Tibial artery (tissue), 4 donors: ENCODE measurements at regions of chr13 and their contacts with region 1.

Region 1: DNA sequence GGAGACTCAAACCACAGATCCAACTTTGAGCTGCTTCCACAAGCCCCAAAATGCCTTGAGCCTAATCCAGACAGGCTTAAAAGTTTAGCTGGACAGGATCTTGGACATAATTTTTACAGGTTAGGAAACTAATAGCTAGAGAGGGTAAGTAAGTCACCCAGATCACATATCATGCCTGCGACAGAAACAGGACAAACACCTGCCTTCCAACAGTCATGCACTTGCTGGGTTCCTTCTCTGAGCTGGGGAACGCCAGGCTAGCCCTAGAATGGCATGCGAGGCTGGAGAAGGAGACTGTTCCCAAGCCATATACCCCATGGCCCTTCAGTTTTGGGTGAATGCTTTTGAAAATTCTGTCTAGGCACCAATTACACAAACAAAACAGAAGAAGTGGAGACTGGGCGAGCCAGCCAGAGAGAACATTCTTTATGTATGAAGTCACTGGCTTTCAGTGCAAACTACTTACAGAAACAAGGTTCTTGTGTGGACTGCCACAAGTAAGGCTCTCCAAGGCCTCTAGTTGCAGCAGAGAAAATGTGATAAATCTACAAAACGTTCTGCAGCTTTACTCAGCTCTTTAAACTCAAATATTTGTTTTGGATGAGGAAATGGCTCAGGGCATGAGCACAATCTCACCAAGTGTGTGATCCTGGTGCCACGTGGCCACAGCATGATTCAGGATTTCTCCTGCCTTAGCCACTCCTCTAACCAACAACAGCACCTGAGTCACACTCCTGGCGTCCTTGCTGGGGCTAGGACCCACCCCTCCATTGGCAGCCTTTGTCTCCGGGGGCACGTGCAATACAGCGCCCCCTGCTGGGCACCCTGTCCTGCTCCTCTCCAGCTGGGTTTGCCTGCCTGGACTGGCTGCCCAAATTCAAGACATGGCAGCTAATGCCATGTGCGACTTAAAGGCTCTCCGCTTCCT is 73.4 kb upstream of the UBL3 start:
- DNase-seq: peak; percentile 89 to 94
- H3K4me3 ChIP-seq: no peak overlapping the region
- H3K27ac ChIP-seq: peak overlapping the region; percentile 78 to 86
- H3K4me1 ChIP-seq: peaks cover 0 to 41% (median 37%) of the 10 kb centered on the region in 4 donors
- H3K27me3 ChIP-seq: no peaks in the 10 kb centered on the region
- CTCF ChIP-seq: peak; percentile 77 to 86

Region 2: GRCh38 chr13:29595380-29596063 is 328.3 kb before region 1 on chr13 and contains the start of gene SLC7A1:
- intact Hi-C with region 1: loop called (anchors 5 kb)
- DNase-seq: peak; percentile 74 to 87
- H3K4me3 ChIP-seq: peak within 1 kb of the TSS; percentile 72 to 97
- H3K27ac ChIP-seq: peak within 1 kb of the TSS; percentile 93 to 98
- H3K4me1 ChIP-seq: peaks cover 0 to 20% (median 9%) of the 10 kb centered on the region in 4 donors
- H3K27me3 ChIP-seq: no peaks in the 10 kb centered on the region
- CTCF ChIP-seq: peak in 1 of 2 experiments; percentile 18

Region 3: GRCh38 chr13:29817604-29818378 is 106.0 kb before region 1 on chr13:
- intact Hi-C with region 1: no loop called
- DNase-seq: no peak
- H3K4me3 ChIP-seq: no peak overlapping the region
- H3K27ac ChIP-seq: no peak overlapping the region
- H3K4me1 ChIP-seq: peaks cover 0 to 44% (median 4%) of the 10 kb centered on the region in 4 donors
- H3K27me3 ChIP-seq: no peaks in the 10 kb centered on the region
- CTCF ChIP-seq: no peak

Region 4: GRCh38 chr13:29850224-29850898 is 73.5 kb before region 1 on chr13 and contains the start of gene UBL3:
- intact Hi-C with region 1: loop called (anchors 2 kb)
- DNase-seq: peak; percentile 96 to 98
- H3K4me3 ChIP-seq: peak within 1 kb of the TSS; percentile 76 to 81
- H3K27ac ChIP-seq: peak within 1 kb of the TSS; percentile 98 to 99
- H3K4me1 ChIP-seq: peaks cover 0 to 27% (median 6%) of the 10 kb centered on the region in 4 donors
- H3K27me3 ChIP-seq: no peaks in the 10 kb centered on the region
- CTCF ChIP-seq: no peak

Region 5: GRCh38 chr13:30880856-30881155 is 957.0 kb after region 1 on chr13:
- intact Hi-C with region 1: no loop called
- DNase-seq: peak; percentile 70 to 85
- H3K4me3 ChIP-seq: no peak overlapping the region
- H3K27ac ChIP-seq: peak overlapping the region; percentile 92 to 93
- H3K4me1 ChIP-seq: peaks cover 0 to 66% (median 37%) of the 10 kb centered on the region in 4 donors
- H3K27me3 ChIP-seq: no peaks in the 10 kb centered on the region
- CTCF ChIP-seq: no peak